ENCODE measurements at regions of chr9 and their contacts with region 1.

Region 1: DNA sequence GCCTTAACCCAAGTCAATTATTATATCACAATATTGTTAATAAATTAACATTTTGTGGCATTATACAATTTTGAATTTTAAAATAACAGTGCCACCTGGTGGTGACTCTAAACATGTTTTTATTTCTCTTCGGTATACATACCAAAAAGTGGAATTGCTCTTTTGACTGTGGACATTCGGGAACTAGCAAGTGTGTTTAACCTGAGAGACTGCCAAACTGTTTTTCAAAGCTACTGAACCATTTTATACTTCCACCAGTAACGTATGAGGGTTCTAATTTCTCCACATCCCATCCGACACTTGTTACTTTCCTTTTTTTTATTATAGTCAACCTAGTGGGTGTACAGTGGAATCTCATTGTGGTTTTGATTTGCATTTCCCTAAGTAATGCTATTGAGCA is 18.3 kb upstream of the HSDL2 start:
- DNase-seq: no peak
- H3K4me3 ChIP-seq: no peak overlapping the region
- H3K27me3 ChIP-seq: no peaks in the 10 kb centered on the region
- CTCF ChIP-seq: 0 out of 2 replicates have a peak, but pooled peaks have one; percentile 24

Region 2: GRCh38 chr9:112086627-112087026 is 275.0 kb before region 1 on chr9:
- CTCF ChIA-PET with region 1: interaction called, 21 read pairs
- POLR2A ChIA-PET with region 1: no interaction called
- DNase-seq: no peak
- H3K4me3 ChIP-seq: no peak overlapping the region
- H3K27me3 ChIP-seq: no peaks in the 10 kb centered on the region
- CTCF ChIP-seq: peak; percentile 52

Region 3: GRCh38 chr9:112091810-112092209 is 269.8 kb before region 1 on chr9:
- CTCF ChIA-PET with region 1: interaction called, 68 read pairs
- POLR2A ChIA-PET with region 1: no interaction called
- DNase-seq: no peak
- H3K4me3 ChIP-seq: no peak overlapping the region
- H3K27me3 ChIP-seq: no peaks in the 10 kb centered on the region
- CTCF ChIP-seq: peak; percentile 48

Region 4: DNA sequence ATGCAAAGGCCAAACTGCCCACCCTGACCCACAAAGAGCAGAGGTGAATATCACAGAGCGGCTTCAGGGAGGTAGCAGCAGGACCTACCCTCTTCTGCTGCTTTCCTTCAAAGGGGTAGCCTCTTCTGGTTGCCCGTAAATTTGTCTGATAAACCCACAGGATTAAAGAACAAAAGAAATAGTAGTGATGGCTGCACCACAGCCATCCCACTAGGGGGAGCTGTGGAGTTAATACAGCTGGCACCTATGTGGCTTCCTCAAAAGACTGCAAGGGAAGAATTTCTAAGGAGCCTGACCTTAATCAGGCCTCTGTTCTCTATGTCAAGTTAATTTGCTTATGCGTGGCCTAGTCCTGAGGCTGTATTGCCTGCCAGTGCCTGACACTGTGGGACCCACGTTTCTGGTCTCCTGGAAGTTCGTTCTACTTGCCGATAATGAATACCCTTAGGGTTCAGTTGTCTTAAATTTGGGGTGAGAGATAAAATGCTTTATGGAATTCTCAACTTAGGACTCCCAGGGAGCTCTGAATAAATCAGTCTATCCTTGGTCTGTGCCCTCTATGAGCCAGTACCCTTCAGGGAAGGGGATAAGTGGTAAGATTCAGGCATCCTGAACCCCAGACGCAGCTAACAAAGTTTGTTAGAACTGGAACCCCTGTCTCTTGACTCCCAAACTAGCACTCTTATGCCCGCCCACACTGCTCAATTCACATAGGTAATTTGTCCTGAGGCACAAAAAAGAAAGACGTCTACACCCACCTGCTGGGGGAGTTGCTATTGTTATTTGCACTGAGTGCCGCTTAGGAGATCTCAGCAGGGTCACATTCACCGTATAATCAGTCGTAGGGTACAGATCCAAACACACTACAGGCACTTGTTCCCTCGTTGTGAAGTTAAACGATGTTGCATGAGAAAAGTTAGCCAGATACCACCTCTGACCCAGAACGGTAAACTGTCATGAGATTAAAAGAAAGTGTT is 263.6 kb before region 1 on chr9:
- CTCF ChIA-PET with region 1: interaction called, 68 read pairs
- POLR2A ChIA-PET with region 1: no interaction called
- DNase-seq: no peak
- H3K4me3 ChIP-seq: no peak overlapping the region
- H3K27me3 ChIP-seq: no peaks in the 10 kb centered on the region
- CTCF ChIP-seq: peak; percentile 90

Region 5: GRCh38 chr9:112379177-112380101 is 17.8 kb after region 1 on chr9:
- CTCF ChIA-PET with region 1: interaction called, 10 read pairs
- POLR2A ChIA-PET with region 1: no interaction called
- DNase-seq: peak; percentile 89
- H3K4me3 ChIP-seq: peak overlapping the region; percentile 90
- H3K27me3 ChIP-seq: no peaks in the 10 kb centered on the region
- CTCF ChIP-seq: peak; percentile 14; the same call in 1 of the 2 replicates